Activated B cell treated with CpG ODN at 0.5 μM for 24 hours (primary cell): ENCODE measurements at regions of chr22 and their contacts with region 1.

Region 1: GRCh38 chr22:19479357-19480172 is at the start of gene CDC45:
- DNase-seq: peak; percentile 79
- ATAC-seq: peak; percentile 93
- H3K4me3 Mint-ChIP-seq: peak within 1 kb of the TSS; percentile 93
- H3K27ac Mint-ChIP-seq: peak within 1 kb of the TSS; percentile 98
- H3K4me1 Mint-ChIP-seq: peaks cover 26% of the 10 kb centered on the region
- H3K27me3 Mint-ChIP-seq: no peaks in the 10 kb centered on the region
- CTCF ChIP-seq: no peak
- total RNA-seq, gene CDC45: 3.9 and 4.1 TPM in 2 replicates

Region 2: GRCh38 chr22:19143967-19144400 is 335.6 kb before region 1 on chr22:
- CTCF ChIA-PET with region 1: interaction called, 16 read pairs
- POLR2A ChIA-PET with region 1: interaction called, 17 read pairs
- intact Hi-C with region 1: loop called (anchors 1 kb)
- DNase-seq: no peak
- ATAC-seq: no peak
- H3K4me3 Mint-ChIP-seq: peak overlapping the region; percentile 100
- H3K27ac Mint-ChIP-seq: peak overlapping the region; percentile 95
- H3K4me1 Mint-ChIP-seq: peaks cover 20% of the 10 kb centered on the region
- H3K27me3 Mint-ChIP-seq: peaks cover 13% of the 10 kb centered on the region
- CTCF ChIP-seq: no peak

Region 3: GRCh38 chr22:19218541-19219233 is 260.9 kb before region 1 on chr22:
- CTCF ChIA-PET with region 1: no interaction called
- POLR2A ChIA-PET with region 1: no interaction called
- intact Hi-C with region 1: loop called (anchors 1 kb)
- DNase-seq: no peak
- ATAC-seq: no peak
- H3K4me3 Mint-ChIP-seq: no peak overlapping the region
- H3K27ac Mint-ChIP-seq: no peak overlapping the region
- H3K4me1 Mint-ChIP-seq: peaks cover 4% of the 10 kb centered on the region
- H3K27me3 Mint-ChIP-seq: peaks cover 2% of the 10 kb centered on the region
- CTCF ChIP-seq: no peak

Region 4: DNA sequence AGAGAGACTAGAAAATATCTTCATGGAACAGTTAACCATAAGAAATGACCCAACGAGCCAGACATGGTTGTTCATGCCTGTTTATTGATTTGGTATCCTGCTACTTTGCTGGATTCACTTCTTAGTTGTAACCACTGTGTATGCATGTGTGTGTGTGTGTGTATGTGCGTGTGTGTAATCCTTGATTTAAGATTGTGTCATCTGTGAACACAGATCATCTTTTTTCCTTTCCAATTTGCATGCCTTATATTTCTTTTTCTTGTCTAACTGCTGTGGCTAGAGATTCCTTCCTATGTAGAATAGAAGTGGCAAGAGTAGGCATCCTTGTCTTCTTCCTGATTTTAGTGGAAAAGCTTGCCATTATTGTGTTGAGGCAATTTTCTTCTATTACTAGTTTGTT is 171.7 kb before region 1 on chr22:
- CTCF ChIA-PET with region 1: no interaction called
- POLR2A ChIA-PET with region 1: no interaction called
- intact Hi-C with region 1: no loop called
- DNase-seq: no peak
- ATAC-seq: no peak
- H3K4me3 Mint-ChIP-seq: no peak overlapping the region
- H3K27ac Mint-ChIP-seq: no peak overlapping the region
- H3K4me1 Mint-ChIP-seq: no peaks in the 10 kb centered on the region
- H3K27me3 Mint-ChIP-seq: no peaks in the 10 kb centered on the region
- CTCF ChIP-seq: no peak

Region 5: GRCh38 chr22:19361501-19362103 is 118.0 kb before region 1 on chr22:
- CTCF ChIA-PET with region 1: no interaction called
- POLR2A ChIA-PET with region 1: interaction called, 5 read pairs
- intact Hi-C with region 1: loop called (anchors 2 kb)
- DNase-seq: peak; percentile 41
- ATAC-seq: peak; percentile 90
- H3K4me3 Mint-ChIP-seq: peak overlapping the region; percentile 71
- H3K27ac Mint-ChIP-seq: peak overlapping the region; percentile 95
- H3K4me1 Mint-ChIP-seq: peaks cover 80% of the 10 kb centered on the region
- H3K27me3 Mint-ChIP-seq: no peaks in the 10 kb centered on the region
- CTCF ChIP-seq: no peak

Region 6: GRCh38 chr22:19447388-19448075 is 32.0 kb before region 1 on chr22 and contains the start of gene C22orf39:
- CTCF ChIA-PET with region 1: interaction called, 4 read pairs
- POLR2A ChIA-PET with region 1: interaction called, 16 read pairs
- intact Hi-C with region 1: loop called (anchors 1 kb)
- DNase-seq: peak; percentile 78
- ATAC-seq: peak; percentile 85
- H3K4me3 Mint-ChIP-seq: peak within 1 kb of the TSS; percentile 95
- H3K27ac Mint-ChIP-seq: peak within 1 kb of the TSS; percentile 98
- H3K4me1 Mint-ChIP-seq: peaks cover 31% of the 10 kb centered on the region
- H3K27me3 Mint-ChIP-seq: no peaks in the 10 kb centered on the region
- CTCF ChIP-seq: no peak
- total RNA-seq, gene C22orf39: 35.7 and 43.0 TPM in 2 replicates

Region 7: GRCh38 chr22:19629720-19630419 is 150.3 kb after region 1 on chr22:
- CTCF ChIA-PET with region 1: interaction called, 17 read pairs
- POLR2A ChIA-PET with region 1: interaction called, 3 read pairs
- intact Hi-C with region 1: loop called (anchors 1 kb)
- DNase-seq: peak; percentile 74
- ATAC-seq: peak; percentile 94
- H3K4me3 Mint-ChIP-seq: no peak overlapping the region
- H3K27ac Mint-ChIP-seq: no peak overlapping the region
- H3K4me1 Mint-ChIP-seq: no peaks in the 10 kb centered on the region
- H3K27me3 Mint-ChIP-seq: peaks cover 24% of the 10 kb centered on the region
- CTCF ChIP-seq: peak; percentile 78

Region 8: DNA sequence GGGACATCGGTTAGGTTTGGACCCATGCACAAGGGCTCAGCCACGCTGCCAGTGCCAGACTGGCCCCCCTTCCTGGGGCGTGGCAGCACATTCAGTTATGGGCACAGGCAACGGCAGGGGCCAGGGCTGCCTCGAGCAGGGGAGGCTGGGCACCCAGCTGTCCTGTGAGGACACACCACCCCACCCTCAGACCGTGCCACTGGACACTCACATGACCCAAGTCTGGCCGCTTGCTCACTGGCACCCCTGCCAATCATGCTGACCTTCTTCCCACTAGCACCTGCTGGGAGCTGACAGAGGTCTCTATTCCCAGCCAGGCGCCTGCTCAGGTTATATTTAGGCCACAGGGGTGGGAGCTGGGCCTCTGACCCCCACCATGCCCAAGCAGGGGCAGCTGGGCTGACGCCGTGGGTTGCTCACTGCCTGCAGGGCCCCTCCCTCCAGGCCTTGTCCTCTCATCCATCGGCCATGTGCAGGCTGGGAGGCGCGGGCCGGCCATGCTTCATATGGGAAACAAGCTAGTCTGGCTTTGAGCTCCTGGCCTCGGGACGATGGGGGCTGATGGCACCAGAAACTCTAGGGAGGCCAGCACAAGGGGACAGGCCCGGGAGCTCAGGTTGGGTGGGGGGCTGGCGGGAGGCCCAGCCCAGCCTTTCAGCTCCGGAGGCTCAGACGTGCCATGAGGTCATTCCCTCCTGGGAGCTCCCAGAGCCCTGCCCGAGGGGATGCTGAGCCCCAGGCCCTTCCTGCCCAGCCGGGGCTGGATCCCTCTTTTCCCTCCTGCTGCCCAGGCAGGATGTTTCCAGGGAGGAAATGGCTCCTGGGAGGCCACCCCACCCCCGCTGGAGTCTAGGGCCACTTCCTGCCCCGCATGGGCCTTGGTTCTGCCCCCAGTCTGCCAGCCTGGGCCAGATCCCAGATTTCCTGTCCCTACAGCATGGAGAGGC is 265.9 kb after region 1 on chr22:
- CTCF ChIA-PET with region 1: no interaction called
- POLR2A ChIA-PET with region 1: no interaction called
- intact Hi-C with region 1: no loop called
- DNase-seq: no peak
- ATAC-seq: no peak
- H3K4me3 Mint-ChIP-seq: no peak overlapping the region
- H3K27ac Mint-ChIP-seq: no peak overlapping the region
- H3K4me1 Mint-ChIP-seq: no peaks in the 10 kb centered on the region
- H3K27me3 Mint-ChIP-seq: no peaks in the 10 kb centered on the region
- CTCF ChIP-seq: no peak